ENCODE measurements at regions of chr2 and their contacts with region 1.

Region 1: GRCh38 chr2:168346725-168347477 is 99.5 kb upstream of the STK39 start:
- ATAC-seq: peak; percentile 61 to 93 (median 84)
- H3K4me3 ChIP-seq: peak overlapping the region; percentile 19 to 33 (median 27)
- H3K27ac ChIP-seq: peak overlapping the region in 1 of 2 donors; percentile 28
- H3K4me1 ChIP-seq: peaks cover 5% of the 10 kb centered on the region in 2 donors

Region 2: DNA sequence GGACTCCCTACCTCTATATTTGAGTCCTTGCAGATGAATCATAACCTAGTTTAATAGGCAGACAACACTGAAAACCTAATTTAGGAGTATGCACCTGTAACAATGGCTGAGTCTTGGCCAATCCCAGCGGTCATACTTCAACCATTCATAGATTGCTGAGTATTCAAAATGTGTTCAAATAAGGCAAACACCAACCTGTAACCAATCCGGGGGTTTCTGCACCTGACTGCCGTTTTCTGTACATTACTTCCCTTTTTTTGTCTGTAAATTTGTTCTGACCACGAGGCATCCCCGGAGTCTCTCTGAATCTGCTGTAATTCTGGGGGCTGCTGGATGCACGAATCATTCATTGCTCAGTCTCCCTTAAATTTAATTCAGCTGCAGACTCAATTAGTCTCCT is 438.1 kb before region 1 on chr2:
- in situ Hi-C with region 1: no loop called
- ATAC-seq: no peak
- H3K4me3 ChIP-seq: no peak overlapping the region
- H3K27ac ChIP-seq: no peak overlapping the region
- H3K4me1 ChIP-seq: no peaks in the 10 kb centered on the region

Region 3: GRCh38 chr2:168758970-168759820 is 412.3 kb after region 1 on chr2:
- in situ Hi-C with region 1: loop called in 4 of 9 experiments (anchors 10 to 25 kb)
- ATAC-seq: peak in 5 of 8 experiments; percentile 27 to 89 (median 82)
- H3K4me3 ChIP-seq: no peak overlapping the region
- H3K27ac ChIP-seq: no peak overlapping the region
- H3K4me1 ChIP-seq: no peaks in the 10 kb centered on the region

Region 4: DNA sequence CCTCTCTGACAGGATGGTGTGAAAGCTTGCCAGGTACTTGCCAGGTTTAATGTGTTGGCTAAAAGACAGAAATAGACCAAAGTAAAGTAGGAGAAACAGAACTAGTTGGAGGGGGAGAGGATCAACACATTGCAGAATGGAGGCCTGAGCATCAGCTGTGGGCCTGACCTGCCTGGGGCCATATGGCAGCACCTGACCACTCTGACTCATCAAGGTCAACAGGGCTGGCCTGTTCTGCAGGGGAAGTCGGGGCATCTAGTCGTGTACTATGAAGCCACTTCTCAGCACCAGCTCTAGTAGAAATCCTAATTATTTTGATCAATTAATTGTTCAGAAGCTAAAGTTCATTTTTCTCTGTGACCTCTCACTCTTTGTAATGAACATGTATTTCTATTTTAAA is 419.7 kb after region 1 on chr2:
- in situ Hi-C with region 1: loop called in 3 of 9 experiments (anchors 10 to 25 kb)
- ATAC-seq: peak in 1 of 8 experiments; percentile 70
- H3K4me3 ChIP-seq: no peak overlapping the region
- H3K27ac ChIP-seq: no peak overlapping the region
- H3K4me1 ChIP-seq: no peaks in the 10 kb centered on the region

Region 5: GRCh38 chr2:169141713-169142352 is 794.9 kb after region 1 on chr2:
- in situ Hi-C with region 1: loop called in 1 of 9 experiments (anchors 25 kb)
- ATAC-seq: peak in 3 of 8 experiments; percentile 68 to 78 (median 78)
- H3K4me3 ChIP-seq: no peak overlapping the region
- H3K27ac ChIP-seq: no peak overlapping the region
- H3K4me1 ChIP-seq: no peaks in the 10 kb centered on the region